ENCODE measurements at regions of chr9 and their contacts with region 1.

Region 1: DNA sequence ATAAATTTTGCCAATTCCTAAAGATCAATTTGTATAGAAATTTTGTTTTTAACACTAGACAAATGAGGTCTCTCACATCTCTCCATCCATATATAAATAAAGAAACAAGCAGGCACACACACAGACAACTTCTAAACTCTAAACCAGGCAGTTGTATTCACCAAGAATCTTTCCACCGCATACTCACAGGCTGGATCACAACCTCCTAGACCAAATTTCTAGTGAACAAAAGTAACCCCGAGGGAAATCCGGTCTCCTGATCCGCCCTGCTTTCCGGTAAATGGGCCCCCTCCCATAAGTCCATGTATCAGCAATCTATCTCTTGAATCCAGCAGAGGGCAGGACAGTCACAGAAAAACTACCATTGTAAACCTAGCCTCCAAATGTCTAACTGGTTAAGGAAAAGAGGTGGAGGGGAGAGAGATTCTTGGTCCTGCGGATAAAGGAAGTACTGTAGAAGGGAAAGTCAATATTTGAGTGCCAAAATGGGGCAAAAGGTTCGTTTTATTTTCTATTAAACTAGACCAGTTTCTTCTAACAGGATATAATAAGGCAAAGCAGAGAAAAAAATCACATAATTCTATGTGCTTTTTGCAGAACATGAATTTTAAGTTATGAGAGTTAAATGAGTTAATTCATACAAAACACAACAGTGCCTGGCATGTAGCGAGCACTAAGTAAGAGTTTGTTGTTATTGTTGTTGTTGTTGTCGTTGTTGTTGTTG is 4.8 kb upstream of the SMU1 start:
- DNase-seq: peak; percentile 31 to 42
- ATAC-seq: peak; percentile 80 to 88
- H3K4me3 ChIP-seq: peak overlapping the region in 1 of 4 donors; percentile 14
- H3K27ac ChIP-seq: peak overlapping the region in 3 of 4 donors; percentile 30 to 52 (median 39)
- H3K4me1 ChIP-seq: peaks cover 5 to 9% of the 10 kb centered on the region in 2 donors
- H3K27me3 ChIP-seq: no peaks in the 10 kb centered on the region
- CTCF ChIP-seq: peak; percentile 80 to 86 (median 84)
- POLR2A ChIP-seq: no peak

Region 2: GRCh38 chr9:32703635-32704034 is 377.7 kb before region 1 on chr9:
- in situ Hi-C with region 1: no loop called
- intact Hi-C with region 1: no loop called
- DNase-seq: no peak
- ATAC-seq: no peak
- H3K4me3 ChIP-seq: no peak overlapping the region
- H3K27ac ChIP-seq: no peak overlapping the region
- H3K4me1 ChIP-seq: no peaks in the 10 kb centered on the region
- H3K27me3 ChIP-seq: no peaks in the 10 kb centered on the region
- CTCF ChIP-seq: no peak
- POLR2A ChIP-seq: no peak

Region 3: GRCh38 chr9:33101108-33101951 is 20.0 kb after region 1 on chr9:
- in situ Hi-C with region 1: no loop called
- intact Hi-C with region 1: loop called (anchors 2 kb)
- DNase-seq: peak; percentile 66 to 88
- ATAC-seq: peak; percentile 97
- H3K4me3 ChIP-seq: no peak overlapping the region
- H3K27ac ChIP-seq: peak overlapping the region; percentile 80 to 88 (median 85)
- H3K4me1 ChIP-seq: peaks cover 14 to 19% of the 10 kb centered on the region in 2 donors
- H3K27me3 ChIP-seq: no peaks in the 10 kb centered on the region
- CTCF ChIP-seq: no peak
- POLR2A ChIP-seq: no peak